K562 (cell line): ENCODE measurements at regions of chr1 and their contacts with region 1.

Region 1: GRCh38 chr1:92851729-92852128 is 19.9 kb downstream of the RPL5 start:
- DNase-seq: peak in 1 of 4 experiments; percentile 38
- ATAC-seq: peak; percentile 50
- H3K4me3 ChIP-seq: peak overlapping the region; percentile 7
- H3K27ac ChIP-seq: no peak overlapping the region
- H3K4me1 ChIP-seq: peaks cover 14 to 19% of the 10 kb centered on the region in 2 experiments; a peak in 4 of 5 replicates
- H3K27me3 ChIP-seq: no peaks in the 10 kb centered on the region
- CTCF ChIP-seq: no peak
- EP300 ChIP-seq: no peak
- POLR2A ChIP-seq: no peak
- RAD21 ChIP-seq: no peak

Region 2: GRCh38 chr1:92838519-92838918 is 13.2 kb before region 1 on chr1:
- CTCF ChIA-PET with region 1: interaction called, 3 read pairs
- POLR2A ChIA-PET with region 1: interaction called, 13 read pairs
- in situ Hi-C with region 1: no loop called
- intact Hi-C with region 1: no loop called
- DNase-seq: no peak
- ATAC-seq: no peak
- H3K4me3 ChIP-seq: no peak overlapping the region
- H3K27ac ChIP-seq: peak overlapping the region; percentile 18; the same call in 1 of the 3 replicates
- H3K4me1 ChIP-seq: peaks cover 6 to 16% of the 10 kb centered on the region in 2 experiments; a peak in 3 of 5 replicates
- H3K27me3 ChIP-seq: no peaks in the 10 kb centered on the region
- CTCF ChIP-seq: no peak
- EP300 ChIP-seq: no peak
- POLR2A ChIP-seq: no peak
- RAD21 ChIP-seq: no peak

Region 3: GRCh38 chr1:93148001-93148400 is 296.3 kb after region 1 on chr1:
- CTCF ChIA-PET with region 1: no interaction called
- POLR2A ChIA-PET with region 1: no interaction called
- in situ Hi-C with region 1: no loop called
- intact Hi-C with region 1: no loop called
- DNase-seq: no peak
- ATAC-seq: no peak
- H3K4me3 ChIP-seq: no peak overlapping the region
- H3K27ac ChIP-seq: no peak overlapping the region
- H3K4me1 ChIP-seq: no peaks in the 10 kb centered on the region
- H3K27me3 ChIP-seq: no peaks in the 10 kb centered on the region
- CTCF ChIP-seq: no peak
- EP300 ChIP-seq: no peak
- POLR2A ChIP-seq: no peak
- RAD21 ChIP-seq: no peak